Prostate gland (tissue), 2 donors: ENCODE measurements at regions of chr16 and their contacts with region 1.

Region 1: GRCh38 chr16:73054814-73055513 is 7.0 kb upstream of the ZFHX3 start:
- DNase-seq: no peak
- H3K4me3 ChIP-seq: peak overlapping the region; percentile 7 to 87
- H3K27ac ChIP-seq: peak overlapping the region; percentile 97 to 100
- H3K4me1 ChIP-seq: peaks cover 32% of the 10 kb centered on the region
- H3K27me3 ChIP-seq: no peaks in the 10 kb centered on the region
- CTCF ChIP-seq: no peak
- POLR2A ChIP-seq: no peak

Region 2: GRCh38 chr16:72787514-72788268 is 267.3 kb before region 1 on chr16:
- intact Hi-C with region 1: loop called (anchors 5 kb)
- DNase-seq: peak; percentile 84
- H3K4me3 ChIP-seq: peak overlapping the region; percentile 24 to 35
- H3K27ac ChIP-seq: peak overlapping the region; percentile 78
- H3K4me1 ChIP-seq: no peaks in the 10 kb centered on the region
- H3K27me3 ChIP-seq: no peaks in the 10 kb centered on the region
- CTCF ChIP-seq: no peak
- POLR2A ChIP-seq: no peak